MCF 10A (cell line): ENCODE measurements at regions of chr1 and their contacts with region 1.

Region 1: DNA sequence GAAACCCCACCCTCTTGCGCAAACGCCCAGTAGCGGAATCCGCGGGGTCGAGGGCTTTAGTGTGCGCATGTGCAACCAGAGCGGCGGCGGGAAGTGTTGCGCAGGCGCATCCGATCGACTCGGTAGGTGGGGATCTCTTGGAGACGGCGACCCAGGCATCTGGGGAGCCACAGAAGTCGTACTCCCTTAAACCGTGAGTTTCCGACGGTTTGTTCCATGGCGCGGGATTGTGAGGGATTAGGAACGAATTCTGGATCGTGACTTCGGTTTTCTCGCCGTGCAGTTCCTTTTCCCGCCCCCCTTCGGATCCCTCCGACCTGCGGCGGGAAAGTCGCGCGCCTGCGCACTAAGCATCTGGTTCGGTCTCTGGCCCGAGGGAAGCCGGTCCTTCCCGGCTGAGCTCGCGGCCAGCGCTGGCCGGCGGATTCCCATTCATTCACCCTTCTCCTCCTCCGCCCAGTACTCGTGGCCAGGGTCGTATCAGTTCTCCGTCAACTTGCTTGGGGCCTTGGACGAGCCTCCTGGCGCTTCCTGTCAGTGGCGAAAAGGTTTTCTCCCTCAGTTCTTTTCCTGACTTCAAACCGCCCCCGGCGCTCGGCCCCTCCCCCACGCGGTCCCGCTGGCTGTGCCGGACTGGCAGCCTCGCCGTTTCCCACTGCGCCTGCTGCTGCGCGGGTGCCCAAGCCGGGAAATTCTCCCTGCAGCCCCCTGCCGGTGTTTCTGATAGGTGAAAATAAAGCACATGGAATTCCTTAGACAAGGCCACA is at the start of gene CDC7:
- DNase-seq: peak; percentile 89
- H3K4me3 Mint-ChIP-seq: no peak within 1 kb of the TSS
- H3K27ac Mint-ChIP-seq: no peak within 1 kb of the TSS
- H3K4me1 Mint-ChIP-seq: peaks cover 17% of the 10 kb centered on the region
- H3K27me3 Mint-ChIP-seq: no peaks in the 10 kb centered on the region
- CTCF ChIP-seq: peak; percentile 38
- total RNA-seq, gene CDC7: 4.0 and 8.0 TPM in 2 replicates

Region 2: DNA sequence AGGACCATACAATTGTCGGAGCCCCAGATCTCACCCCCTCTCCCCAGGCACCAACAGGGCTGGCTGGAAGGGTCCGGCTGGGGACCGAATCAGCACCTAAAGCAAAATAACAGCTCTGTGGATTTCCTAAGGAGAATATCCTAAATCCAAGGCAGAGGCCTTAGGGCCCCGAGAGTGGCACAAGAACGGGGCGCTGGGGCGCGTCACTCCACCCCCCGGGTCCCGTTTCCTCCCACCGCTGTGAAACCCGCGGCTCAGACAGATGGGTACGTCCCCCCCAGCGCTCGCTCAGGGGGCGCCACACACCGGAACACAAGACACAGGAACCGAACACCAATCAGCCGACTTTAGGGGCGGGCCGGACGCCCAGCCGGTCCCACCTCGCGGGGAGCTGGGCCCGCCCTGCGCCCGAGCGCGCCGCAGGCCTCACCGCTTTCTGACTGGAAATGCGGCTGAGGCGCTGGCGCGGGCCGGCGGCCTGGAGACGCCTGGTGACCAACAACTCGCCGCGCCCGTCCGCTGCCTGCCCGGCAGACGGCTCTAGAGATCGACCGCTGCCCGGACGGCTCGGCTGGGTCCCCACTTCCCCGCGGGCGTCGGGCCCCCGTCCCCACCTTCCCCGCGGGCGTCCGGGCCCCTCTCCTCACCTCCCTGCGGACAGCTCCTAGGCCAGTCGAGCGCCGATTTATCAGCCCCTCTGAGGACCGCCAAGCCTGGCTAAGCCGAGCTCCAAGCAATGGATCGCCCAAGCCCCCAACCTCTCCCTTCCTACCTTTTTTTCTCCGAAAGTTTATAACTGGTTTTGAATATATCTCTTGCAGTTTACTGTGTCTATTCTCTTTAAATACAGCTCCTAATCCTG is 96.6 kb before region 1 on chr1 and contains the start of gene HFM1:
- CTCF ChIA-PET with region 1: no interaction called
- POLR2A ChIA-PET with region 1: no interaction called
- intact Hi-C with region 1: loop called (anchors 2 kb)
- DNase-seq: no peak
- H3K4me3 Mint-ChIP-seq: no peak within 1 kb of the TSS
- H3K27ac Mint-ChIP-seq: no peak within 1 kb of the TSS
- H3K4me1 Mint-ChIP-seq: no peaks in the 10 kb centered on the region
- H3K27me3 Mint-ChIP-seq: peaks cover 82% of the 10 kb centered on the region
- CTCF ChIP-seq: no peak
- total RNA-seq, gene HFM1: not detected in 2 replicates

Region 3: DNA sequence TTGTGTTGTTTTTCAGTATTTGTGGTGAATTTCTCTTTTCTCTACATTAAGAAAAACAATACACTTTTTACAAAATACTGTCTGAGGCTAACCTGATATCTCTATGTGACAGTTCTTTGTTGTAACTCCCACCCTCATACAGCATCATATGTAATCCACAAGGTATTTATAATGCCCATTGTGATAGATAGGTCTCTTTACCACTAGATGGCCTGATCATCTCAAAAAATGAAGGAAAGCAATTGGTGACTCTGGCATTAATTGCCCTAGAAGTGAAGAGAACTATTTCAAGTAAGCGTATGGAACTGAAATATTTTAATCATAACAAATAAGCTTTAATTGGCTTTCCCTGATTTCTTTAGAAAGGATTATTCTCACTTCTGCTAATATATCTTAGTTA is 60.1 kb before region 1 on chr1:
- CTCF ChIA-PET with region 1: interaction called, 8 read pairs
- POLR2A ChIA-PET with region 1: no interaction called
- intact Hi-C with region 1: loop called (anchors 5 kb)
- DNase-seq: peak; percentile 32
- H3K4me3 Mint-ChIP-seq: no peak overlapping the region
- H3K27ac Mint-ChIP-seq: no peak overlapping the region
- H3K4me1 Mint-ChIP-seq: no peaks in the 10 kb centered on the region
- H3K27me3 Mint-ChIP-seq: peaks cover 63% of the 10 kb centered on the region
- CTCF ChIP-seq: peak; percentile 8